Heart right ventricle (tissue), 16 donors: ENCODE measurements at regions of chr15 and their contacts with region 1.

Region 1: DNA sequence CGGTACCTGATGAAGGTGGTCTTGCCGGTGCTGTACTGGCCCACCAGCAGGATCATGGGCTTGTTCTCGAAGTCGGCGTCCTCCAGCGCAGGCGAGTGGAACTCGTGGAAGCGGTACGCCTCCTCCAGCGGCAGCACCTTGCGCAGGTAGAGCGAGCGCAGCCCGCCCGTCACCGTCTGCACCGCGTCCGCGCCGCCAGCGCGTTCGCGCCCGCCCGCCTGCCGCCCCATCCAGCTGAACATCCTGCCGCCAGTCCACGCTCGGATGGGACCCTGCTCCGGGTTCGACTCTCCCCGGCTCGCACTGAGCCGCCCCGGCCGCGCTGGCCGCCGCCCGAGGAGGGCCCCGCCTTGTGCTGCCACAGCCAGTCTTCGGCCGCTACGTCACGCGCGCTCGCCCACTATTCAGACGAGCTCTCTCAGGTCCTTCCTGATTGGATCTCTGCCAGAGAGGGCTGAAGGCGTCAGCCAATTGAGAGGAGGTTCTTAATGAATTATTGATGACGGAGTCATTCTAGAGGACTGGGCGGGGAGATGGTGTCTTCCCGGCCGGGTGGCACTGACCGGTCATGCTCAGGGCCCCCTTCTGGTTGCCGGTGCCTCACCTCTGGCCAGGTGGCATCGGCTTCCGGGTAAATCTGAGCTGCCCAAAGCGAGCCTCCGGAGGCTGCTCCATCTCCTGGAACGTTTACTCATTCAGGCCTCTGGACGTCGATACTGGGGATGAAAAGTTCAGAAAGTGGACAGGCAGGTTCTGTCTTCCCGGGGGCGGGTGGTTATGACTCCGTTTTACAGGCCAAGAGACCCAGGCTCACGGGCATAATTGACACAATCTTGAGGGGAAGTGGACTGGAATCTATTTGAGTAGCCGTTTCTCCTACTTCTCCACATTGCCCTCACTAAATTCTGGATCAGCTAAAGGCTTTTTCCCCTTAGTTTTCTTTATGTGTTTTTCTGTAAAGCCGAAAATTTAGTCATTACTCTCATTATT is at the start of gene EHD4:
- DNase-seq: peak; percentile 98 to 99
- ATAC-seq: peak; percentile 93 to 97 (median 95)
- H3K4me3 ChIP-seq: peak within 1 kb of the TSS; percentile 90 to 98 (median 96)
- H3K27ac ChIP-seq: peak within 1 kb of the TSS; percentile 57 to 99 (median 96)
- H3K4me1 ChIP-seq: peaks cover 0 to 48% (median 38%) of the 10 kb centered on the region in 9 donors
- H3K27me3 ChIP-seq: no peaks in the 10 kb centered on the region
- CTCF ChIP-seq: peak; percentile 15 to 75 (median 40)
- total RNA-seq, gene EHD4: 29.8 to 62.7 (median 46.6) TPM

Region 2: GRCh38 chr15:41774062-41774881 is 198.3 kb before region 1 on chr15 and contains the start of gene MAPKBP1:
- intact Hi-C with region 1: loop called in 2 of 10 experiments (anchors 5 to 10 kb)
- DNase-seq: peak; percentile 96 to 97
- ATAC-seq: peak; percentile 96 to 99 (median 98)
- H3K4me3 ChIP-seq: peak within 1 kb of the TSS; percentile 45 to 85 (median 77)
- H3K27ac ChIP-seq: peak within 1 kb of the TSS; percentile 52 to 88 (median 84)
- H3K4me1 ChIP-seq: peaks cover 13 to 55% (median 43%) of the 10 kb centered on the region in 9 donors
- H3K27me3 ChIP-seq: no peaks in the 10 kb centered on the region
- CTCF ChIP-seq: peak; percentile 29 to 84 (median 64)
- total RNA-seq, gene MAPKBP1: 8.3 to 17.0 (median 13.3) TPM

Region 3: DNA sequence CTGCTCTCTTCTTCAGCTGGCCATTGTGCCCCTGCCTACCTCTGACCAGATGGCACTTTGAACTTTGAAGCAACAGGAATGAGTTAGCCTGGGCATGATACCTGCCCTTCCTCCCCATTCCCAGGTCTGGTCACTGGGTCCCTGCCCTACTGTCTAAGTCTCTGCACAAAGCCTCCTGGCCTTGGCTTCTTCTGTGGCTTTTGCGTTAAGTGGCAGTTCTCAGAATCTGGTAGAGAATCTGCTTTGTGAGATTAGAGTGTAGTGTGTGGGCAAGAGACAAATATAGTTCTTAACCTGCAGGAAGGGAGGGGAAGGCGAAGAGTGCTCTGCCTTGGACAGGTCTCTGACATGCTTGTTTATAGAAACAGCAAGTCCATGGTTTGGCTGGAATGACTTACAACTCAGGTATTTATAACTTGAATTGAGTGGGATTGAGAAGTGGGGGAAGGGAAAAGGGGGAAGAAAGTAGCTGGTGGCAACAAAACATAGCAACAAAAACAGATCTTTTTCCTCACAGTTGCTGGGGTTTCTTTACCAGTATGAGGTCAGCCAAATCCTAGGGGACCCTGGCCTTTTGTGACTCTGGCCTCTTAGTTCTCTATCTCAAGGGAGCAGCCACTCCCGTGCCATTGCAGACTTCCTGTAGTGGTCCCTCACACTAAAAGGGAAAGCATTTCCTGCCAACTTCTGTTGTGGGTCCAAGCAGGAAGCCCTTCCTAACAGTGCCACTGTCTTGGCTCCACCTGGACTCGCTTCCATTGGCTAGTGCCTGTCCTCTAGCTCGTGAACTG is 181.6 kb before region 1 on chr15:
- intact Hi-C with region 1: loop called in 1 of 10 experiments (anchors 10 kb)
- DNase-seq: peak in 1 of 2 donors; percentile 29
- ATAC-seq: peak; percentile 45 to 82 (median 65)
- H3K4me3 ChIP-seq: no peak overlapping the region
- H3K27ac ChIP-seq: peak overlapping the region in 9 of 10 donors; percentile 15 to 65 (median 33)
- H3K4me1 ChIP-seq: peaks cover 17 to 58% (median 43%) of the 10 kb centered on the region in 9 donors
- H3K27me3 ChIP-seq: no peaks in the 10 kb centered on the region
- CTCF ChIP-seq: no peak

Region 4: DNA sequence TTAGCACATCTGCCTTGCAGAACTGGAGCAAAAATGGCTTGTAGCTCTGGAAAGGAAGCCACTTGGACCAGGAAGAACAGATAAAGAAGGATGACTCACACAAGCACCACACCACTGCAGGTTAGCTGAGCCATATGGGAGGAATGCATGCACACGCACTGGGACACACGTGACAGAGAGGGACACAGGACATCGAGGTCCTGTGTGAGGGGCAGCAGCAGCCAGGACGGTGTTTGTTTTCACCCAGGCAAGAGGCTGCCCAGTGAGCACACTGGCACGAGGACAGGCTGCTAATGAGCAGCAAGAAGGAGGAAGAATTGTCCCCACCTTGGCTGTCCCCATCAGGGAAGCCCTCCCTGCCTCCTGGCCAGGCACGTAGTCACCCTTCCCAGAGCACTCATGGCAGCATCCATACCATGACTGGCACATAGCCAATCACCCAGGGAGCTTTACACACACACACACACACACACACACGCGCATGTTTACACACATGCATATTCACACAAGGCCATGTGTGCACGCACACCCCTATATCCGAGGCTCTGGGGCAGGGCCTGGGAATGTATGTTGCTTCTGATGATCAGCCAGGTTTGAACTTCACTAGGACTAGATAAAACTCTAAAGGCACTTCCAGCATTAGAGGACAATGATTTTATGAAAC is 54.6 kb before region 1 on chr15:
- intact Hi-C with region 1: loop called in 5 of 10 experiments (anchors 2 to 10 kb)
- DNase-seq: peak; percentile 37 to 47
- ATAC-seq: peak in 6 of 8 donors; percentile 17 to 67 (median 52)
- H3K4me3 ChIP-seq: peak overlapping the region in 1 of 10 donors; percentile 0
- H3K27ac ChIP-seq: peak overlapping the region; percentile 61 to 87 (median 77)
- H3K4me1 ChIP-seq: peaks cover 38 to 100% (median 100%) of the 10 kb centered on the region in 9 donors
- H3K27me3 ChIP-seq: no peaks in the 10 kb centered on the region
- CTCF ChIP-seq: no peak

Region 5: DNA sequence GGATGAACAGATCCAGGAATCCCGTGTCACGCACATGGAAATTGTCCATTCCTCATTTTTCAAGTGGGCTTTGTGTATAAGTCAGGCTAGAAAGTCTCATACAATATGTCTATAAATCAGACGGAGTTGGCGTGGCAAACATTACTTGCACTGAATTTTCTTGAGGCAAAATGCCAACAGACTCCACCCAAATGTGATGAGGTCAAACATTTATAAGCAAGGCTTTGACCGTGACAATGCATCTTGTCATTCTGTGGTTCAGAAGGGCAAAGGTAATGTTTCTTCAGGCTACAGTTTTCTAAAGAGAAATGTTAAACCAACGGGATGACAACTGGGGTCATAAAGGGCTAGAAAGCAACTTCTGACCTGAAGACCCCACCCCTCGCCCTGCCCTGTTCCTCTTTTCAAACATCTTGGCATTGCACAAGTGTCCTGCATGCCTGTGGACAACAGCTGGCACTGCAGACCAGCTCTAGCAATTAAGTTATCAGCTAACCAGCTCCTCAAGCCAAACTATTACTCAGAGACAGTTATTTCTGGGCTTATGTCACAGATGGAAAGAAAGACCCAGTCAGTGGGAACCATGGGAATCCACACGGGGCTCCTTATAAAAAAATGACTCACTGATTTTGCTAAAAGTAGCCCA is 42.2 kb before region 1 on chr15:
- intact Hi-C with region 1: loop called in 5 of 10 experiments (anchors 2 to 5 kb)
- DNase-seq: no peak
- ATAC-seq: peak; percentile 22 to 80 (median 49)
- H3K4me3 ChIP-seq: no peak overlapping the region
- H3K27ac ChIP-seq: peak overlapping the region in 9 of 10 donors; percentile 47 to 92 (median 75)
- H3K4me1 ChIP-seq: peaks cover 41 to 100% (median 97%) of the 10 kb centered on the region in 9 donors
- H3K27me3 ChIP-seq: no peaks in the 10 kb centered on the region
- CTCF ChIP-seq: peak in 4 of 9 donors; percentile 32 to 51 (median 49)

Region 6: GRCh38 chr15:42018306-42019224 is 46.0 kb after region 1 on chr15:
- intact Hi-C with region 1: no loop called
- DNase-seq: peak; percentile 9 to 69
- ATAC-seq: peak; percentile 55 to 95 (median 84)
- H3K4me3 ChIP-seq: no peak overlapping the region
- H3K27ac ChIP-seq: peak overlapping the region in 5 of 10 donors; percentile 34 to 71 (median 57)
- H3K4me1 ChIP-seq: peaks cover 3 to 17% (median 11%) of the 10 kb centered on the region in 9 donors
- H3K27me3 ChIP-seq: no peaks in the 10 kb centered on the region
- CTCF ChIP-seq: no peak